ENCODE measurements at regions of chr18 and their contacts with region 1.

Region 1: DNA sequence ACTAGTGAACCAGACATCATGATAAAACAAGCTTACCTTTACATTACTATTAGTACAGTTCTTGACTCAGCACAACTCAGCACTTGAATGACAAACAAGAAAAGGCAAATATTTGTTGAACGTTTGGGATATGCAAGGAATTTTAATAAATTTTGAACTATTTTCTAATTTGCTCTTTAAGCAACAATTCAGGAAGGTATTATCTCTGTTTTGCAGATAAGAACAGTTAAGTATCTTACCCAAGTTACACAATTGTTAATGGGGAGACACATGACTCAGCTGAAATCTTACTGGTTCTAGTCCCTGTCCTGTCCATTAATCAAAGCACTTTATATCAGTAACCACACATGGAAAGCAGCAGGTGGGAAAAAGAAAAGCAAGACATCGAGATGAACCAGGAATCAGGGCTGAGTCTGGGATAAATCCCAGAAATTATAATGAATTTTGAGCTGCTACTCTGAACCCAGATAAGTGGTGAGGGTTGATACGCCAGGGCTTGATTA is 493.9 kb upstream of the PIK3C3 start:
- DNase-seq: peak; percentile 19
- ATAC-seq: peak; percentile 51
- H3K4me3 ChIP-seq: no peak overlapping the region
- H3K27ac ChIP-seq: no peak overlapping the region
- H3K4me1 ChIP-seq: peaks cover 32% of the 10 kb centered on the region
- H3K27me3 ChIP-seq: no peaks in the 10 kb centered on the region
- CTCF ChIP-seq: no peak

Region 2: DNA sequence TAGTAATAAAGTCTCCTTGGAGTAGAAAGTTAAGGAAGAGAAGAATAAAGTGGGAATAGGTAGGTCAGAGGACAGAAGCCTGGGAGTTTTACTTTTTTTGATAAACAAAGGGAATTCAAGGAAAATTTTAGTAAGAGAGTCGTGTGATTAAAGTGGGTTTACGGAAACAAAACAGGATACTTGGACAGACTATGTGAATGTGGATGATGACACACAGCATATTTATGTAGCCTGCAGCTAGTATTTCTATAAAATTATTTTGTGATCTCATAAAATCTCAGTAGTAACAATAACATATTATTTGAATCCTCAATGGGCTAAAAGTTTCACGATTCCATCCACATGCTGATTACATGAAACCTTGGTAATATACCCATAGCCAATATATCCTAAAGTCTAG is 43.2 kb after region 1 on chr18:
- CTCF ChIA-PET with region 1: no interaction called
- POLR2A ChIA-PET with region 1: no interaction called
- intact Hi-C with region 1: loop called (anchors 1 kb)
- DNase-seq: peak; percentile 64
- ATAC-seq: peak; percentile 58
- H3K4me3 ChIP-seq: 0 out of 2 replicates have a peak overlapping the region, but pooled peaks have one; percentile 32
- H3K27ac ChIP-seq: peak overlapping the region; percentile 99
- H3K4me1 ChIP-seq: peaks cover 29% of the 10 kb centered on the region
- H3K27me3 ChIP-seq: no peaks in the 10 kb centered on the region
- CTCF ChIP-seq: no peak

Measured in PC-3 (cell line).